ENCODE measurements at regions of chr10 and their contacts with region 1.

Region 1: GRCh38 chr10:99612167-99612831 is 7.9 kb downstream of the SLC25A28 start:
- DNase-seq: no peak
- H3K4me3 ChIP-seq: no peak overlapping the region
- H3K27ac ChIP-seq: peak overlapping the region in 3 of 8 donors; percentile 0 to 31 (median 31)
- H3K4me1 ChIP-seq: peaks cover 6 to 62% (median 36%) of the 10 kb centered on the region in 6 donors
- H3K27me3 ChIP-seq: no peaks in the 10 kb centered on the region
- CTCF ChIP-seq: peak; percentile 56 to 86 (median 78)
- POLR2A ChIP-seq: no peak

Region 2: GRCh38 chr10:99141022-99141422 is 471.3 kb before region 1 on chr10:
- intact Hi-C with region 1: no loop called
- DNase-seq: no peak
- H3K4me3 ChIP-seq: no peak overlapping the region
- H3K27ac ChIP-seq: no peak overlapping the region
- H3K4me1 ChIP-seq: no peaks in the 10 kb centered on the region
- H3K27me3 ChIP-seq: no peaks in the 10 kb centered on the region
- CTCF ChIP-seq: no peak
- POLR2A ChIP-seq: no peak

Region 3: GRCh38 chr10:99394761-99395386 is 217.4 kb before region 1 on chr10:
- intact Hi-C with region 1: loop called (anchors 5 kb)
- DNase-seq: no peak
- H3K4me3 ChIP-seq: no peak overlapping the region
- H3K27ac ChIP-seq: no peak overlapping the region
- H3K4me1 ChIP-seq: peaks cover 0 to 12% (median 0%) of the 10 kb centered on the region in 6 donors
- H3K27me3 ChIP-seq: no peaks in the 10 kb centered on the region
- CTCF ChIP-seq: no peak
- POLR2A ChIP-seq: no peak

Region 4: GRCh38 chr10:99497343-99498025 is 114.8 kb before region 1 on chr10:
- intact Hi-C with region 1: no loop called
- DNase-seq: peak; percentile 77
- H3K4me3 ChIP-seq: no peak overlapping the region
- H3K27ac ChIP-seq: peak overlapping the region in 7 of 8 donors; percentile 42 to 64 (median 60)
- H3K4me1 ChIP-seq: peaks cover 0 to 23% (median 6%) of the 10 kb centered on the region in 6 donors
- H3K27me3 ChIP-seq: peaks cover 0 to 6% (median 0%) of the 10 kb centered on the region in 7 donors
- CTCF ChIP-seq: no peak
- POLR2A ChIP-seq: no peak

Region 5: GRCh38 chr10:99560277-99561126 is 51.8 kb before region 1 on chr10:
- intact Hi-C with region 1: loop called (anchors 5 kb)
- DNase-seq: peak; percentile 38
- H3K4me3 ChIP-seq: no peak overlapping the region
- H3K27ac ChIP-seq: no peak overlapping the region
- H3K4me1 ChIP-seq: peaks cover 0 to 11% (median 0%) of the 10 kb centered on the region in 6 donors
- H3K27me3 ChIP-seq: peaks cover 0 to 8% (median 0%) of the 10 kb centered on the region in 7 donors
- CTCF ChIP-seq: peak; percentile 28 to 78 (median 63)
- POLR2A ChIP-seq: no peak

Measured in spleen (tissue), 13 donors.